B cell (primary cell): ENCODE measurements at regions of chr2 and their contacts with region 1.

Region 1: DNA sequence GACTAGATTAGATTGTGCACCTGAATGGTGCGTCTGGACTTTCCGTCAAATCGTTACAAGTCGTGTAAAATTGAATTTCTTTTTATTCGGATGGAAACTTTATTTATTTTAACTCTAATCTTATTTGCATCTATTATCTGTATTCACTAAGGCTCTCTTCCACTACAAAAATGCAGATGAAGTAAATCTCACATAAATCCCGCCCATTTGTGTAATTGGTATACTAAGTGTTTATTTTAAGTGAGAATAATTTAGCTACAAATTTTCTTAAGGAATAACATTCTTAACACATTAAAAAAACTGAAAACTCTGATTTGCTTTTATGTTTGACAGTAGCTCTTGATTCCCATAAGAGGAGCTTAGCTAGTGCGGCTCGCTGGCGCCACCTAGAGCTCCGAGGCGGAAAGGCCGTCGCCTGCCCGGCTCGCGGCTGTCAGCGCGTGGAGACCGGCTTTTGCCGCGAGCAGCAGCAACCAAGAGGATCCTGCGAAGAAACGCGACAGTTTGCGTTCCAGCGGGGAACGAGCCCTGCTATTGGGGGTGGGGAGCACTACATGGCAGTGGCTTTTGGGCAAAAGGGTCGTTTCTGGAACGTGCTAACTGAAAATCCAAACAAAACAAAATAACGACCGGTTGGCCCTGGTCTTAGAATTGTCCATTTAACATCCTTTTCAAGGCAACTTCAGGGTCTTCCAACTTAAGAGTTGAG is 6.7 kb downstream of the SP9 start:
- DNase-seq: peak; percentile 91
- ATAC-seq: peak; percentile 74
- H3K4me3 ChIP-seq: peak overlapping the region in 1 of 5 experiments; percentile 31
- H3K4me3 Mint-ChIP-seq: peak overlapping the region; percentile 82
- H3K27ac ChIP-seq: no peak overlapping the region
- H3K27ac Mint-ChIP-seq: peak overlapping the region; percentile 88
- H3K4me1 ChIP-seq: peaks cover 54 to 71% of the 10 kb centered on the region in 2 donors
- H3K4me1 Mint-ChIP-seq: peaks cover 37% of the 10 kb centered on the region
- H3K27me3 ChIP-seq: peaks cover 1 to 81% (median 71%) of the 10 kb centered on the region in 4 experiments
- H3K27me3 Mint-ChIP-seq: peaks cover 56% of the 10 kb centered on the region
- CTCF ChIP-seq: peak; percentile 99

Region 2: DNA sequence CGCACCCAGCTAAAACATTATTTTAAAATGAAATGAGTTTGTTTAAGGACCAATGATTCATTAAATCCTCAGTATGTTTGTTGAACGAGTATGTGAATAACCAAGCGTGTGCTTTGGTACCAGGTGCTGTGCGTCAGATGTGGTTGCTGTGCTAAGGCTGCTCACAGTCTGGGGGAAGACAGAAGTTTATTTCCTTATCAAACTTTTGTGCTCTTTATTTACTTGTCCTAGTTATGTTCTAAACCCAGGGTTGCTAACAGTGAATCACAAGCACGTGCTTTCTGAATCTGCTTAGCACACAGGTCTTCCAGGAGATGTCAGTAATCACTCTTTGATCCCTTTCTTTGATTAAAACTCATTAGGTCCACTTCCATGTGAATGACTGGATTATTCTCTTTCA is 1568.8 kb before region 1 on chr2:
- CTCF ChIA-PET with region 1: no interaction called
- POLR2A ChIA-PET with region 1: no interaction called
- intact Hi-C with region 1: no loop called
- DNase-seq: no peak
- ATAC-seq: no peak
- H3K4me3 ChIP-seq: no peak overlapping the region
- H3K4me3 Mint-ChIP-seq: no peak overlapping the region
- H3K27ac ChIP-seq: no peak overlapping the region
- H3K27ac Mint-ChIP-seq: no peak overlapping the region
- H3K4me1 ChIP-seq: no peaks in the 10 kb centered on the region
- H3K4me1 Mint-ChIP-seq: no peaks in the 10 kb centered on the region
- H3K27me3 ChIP-seq: no peaks in the 10 kb centered on the region
- H3K27me3 Mint-ChIP-seq: peaks cover 12% of the 10 kb centered on the region
- CTCF ChIP-seq: no peak

Region 3: GRCh38 chr2:173027181-173028128 is 1314.0 kb before region 1 on chr2:
- CTCF ChIA-PET with region 1: interaction called, 59 read pairs
- POLR2A ChIA-PET with region 1: no interaction called
- intact Hi-C with region 1: loop called (anchors 1 kb)
- DNase-seq: peak; percentile 81
- ATAC-seq: peak; percentile 74
- H3K4me3 ChIP-seq: no peak overlapping the region
- H3K4me3 Mint-ChIP-seq: no peak overlapping the region
- H3K27ac ChIP-seq: no peak overlapping the region
- H3K27ac Mint-ChIP-seq: no peak overlapping the region
- H3K4me1 ChIP-seq: peaks cover 4 to 8% of the 10 kb centered on the region in 2 donors
- H3K4me1 Mint-ChIP-seq: peaks cover 1% of the 10 kb centered on the region
- H3K27me3 ChIP-seq: peaks cover 0 to 3% (median 0%) of the 10 kb centered on the region in 4 experiments
- H3K27me3 Mint-ChIP-seq: peaks cover 16% of the 10 kb centered on the region
- CTCF ChIP-seq: peak; percentile 94

Region 4: GRCh38 chr2:173354601-173355131 is 986.8 kb before region 1 on chr2 and contains the start of gene CDCA7:
- CTCF ChIA-PET with region 1: interaction called, 3 read pairs
- POLR2A ChIA-PET with region 1: no interaction called
- intact Hi-C with region 1: loop called (anchors 5 kb)
- DNase-seq: peak; percentile 69
- ATAC-seq: peak; percentile 70
- H3K4me3 ChIP-seq: peak within 1 kb of the TSS; percentile 48 to 68 (median 64)
- H3K4me3 Mint-ChIP-seq: peak within 1 kb of the TSS; percentile 88
- H3K27ac ChIP-seq: no peak within 1 kb of the TSS
- H3K27ac Mint-ChIP-seq: peak within 1 kb of the TSS; percentile 64
- H3K4me1 ChIP-seq: peaks cover 14 to 20% of the 10 kb centered on the region in 2 donors
- H3K4me1 Mint-ChIP-seq: peaks cover 26% of the 10 kb centered on the region
- H3K27me3 ChIP-seq: peaks cover 0 to 40% (median 16%) of the 10 kb centered on the region in 4 experiments
- H3K27me3 Mint-ChIP-seq: peaks cover 27% of the 10 kb centered on the region
- CTCF ChIP-seq: no peak
- total RNA-seq, gene CDCA7: 2.6 and 3.2 TPM in 2 replicates

Region 5: DNA sequence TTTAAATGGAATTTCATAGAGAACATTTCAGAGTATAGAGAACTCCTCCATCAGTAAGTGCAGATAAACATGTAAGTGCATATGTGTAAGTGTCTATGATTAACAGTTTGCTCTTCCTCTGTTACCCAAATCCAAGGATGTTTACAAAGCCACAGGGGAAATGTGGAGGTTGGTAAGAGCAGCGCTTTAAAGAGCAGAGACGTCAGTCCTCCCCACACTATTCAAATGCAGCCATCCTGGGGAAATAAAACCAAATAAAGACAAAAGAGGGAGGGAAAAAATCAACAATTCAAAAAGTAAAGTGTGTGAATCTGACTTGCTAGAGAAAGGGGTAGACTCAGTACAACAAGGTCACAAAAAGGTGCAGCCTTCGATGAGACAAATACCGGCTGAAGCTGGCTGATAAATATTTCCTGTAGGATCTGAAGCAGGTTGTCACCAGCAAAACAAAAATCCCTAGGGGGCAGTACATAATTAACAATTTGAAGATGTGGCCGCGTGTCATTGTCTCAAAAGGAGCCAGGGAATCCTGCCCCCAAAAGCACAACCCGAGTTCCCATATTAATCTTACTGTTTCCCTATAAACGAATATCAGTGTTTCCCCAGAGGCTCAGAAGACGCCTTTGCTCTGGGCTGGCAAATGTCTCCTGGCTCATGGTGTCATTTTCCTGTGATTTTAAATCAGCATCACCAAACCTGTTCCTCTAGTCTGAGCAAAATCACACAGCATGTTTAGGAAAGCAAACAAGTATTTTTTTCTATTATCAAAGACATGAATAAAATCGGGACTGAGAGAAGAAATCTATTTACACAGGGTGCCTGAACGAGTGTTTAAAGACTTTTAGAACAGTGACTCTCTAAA is 770.2 kb before region 1 on chr2:
- CTCF ChIA-PET with region 1: no interaction called
- POLR2A ChIA-PET with region 1: no interaction called
- intact Hi-C with region 1: loop called (anchors 5 kb)
- DNase-seq: peak; percentile 13
- ATAC-seq: no peak
- H3K4me3 ChIP-seq: no peak overlapping the region
- H3K4me3 Mint-ChIP-seq: no peak overlapping the region
- H3K27ac ChIP-seq: no peak overlapping the region
- H3K27ac Mint-ChIP-seq: no peak overlapping the region
- H3K4me1 ChIP-seq: peaks cover 4 to 6% of the 10 kb centered on the region in 2 donors
- H3K4me1 Mint-ChIP-seq: peaks cover 5% of the 10 kb centered on the region
- H3K27me3 ChIP-seq: peaks cover 0 to 4% (median 0%) of the 10 kb centered on the region in 4 experiments
- H3K27me3 Mint-ChIP-seq: peaks cover 3% of the 10 kb centered on the region
- CTCF ChIP-seq: no peak

Region 6: DNA sequence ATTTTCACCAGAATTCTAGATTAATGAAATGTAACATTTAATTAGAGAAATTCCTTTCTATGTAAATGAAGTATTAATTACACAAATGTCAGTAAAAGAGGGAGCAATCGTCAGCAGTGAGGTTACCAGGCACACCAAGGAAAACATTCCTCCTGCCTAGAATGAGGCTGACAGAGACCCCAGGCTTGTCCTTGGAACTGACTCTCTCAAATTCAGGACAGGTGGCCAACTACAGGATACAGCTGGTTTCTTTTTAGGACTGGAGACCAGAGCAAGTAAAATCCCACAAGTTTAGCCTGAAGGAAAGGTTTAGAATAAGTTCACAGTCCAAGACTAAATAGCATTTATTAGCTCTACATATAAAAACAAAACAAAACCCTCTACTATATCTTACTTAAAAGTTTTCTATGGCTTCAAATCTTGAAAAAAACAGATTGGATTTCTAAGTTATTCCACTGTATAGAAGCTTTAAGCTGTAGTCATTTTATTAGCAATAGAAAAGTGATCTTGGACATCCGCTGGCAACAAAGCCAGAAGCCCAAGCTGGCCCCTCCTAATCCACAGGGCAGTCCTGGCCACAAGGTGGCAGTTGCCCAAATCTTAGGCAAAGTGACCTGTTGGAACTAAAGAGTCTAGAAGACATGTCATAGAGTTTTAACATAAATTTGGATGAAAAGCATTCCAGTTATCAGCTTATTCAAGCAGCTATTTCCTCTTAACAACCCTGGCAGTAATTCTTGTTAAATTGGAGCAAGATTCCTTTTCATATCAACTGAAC is 457.2 kb before region 1 on chr2:
- CTCF ChIA-PET with region 1: interaction called, 6 read pairs
- POLR2A ChIA-PET with region 1: no interaction called
- intact Hi-C with region 1: loop called (anchors 10 kb)
- DNase-seq: peak; percentile 36
- ATAC-seq: peak; percentile 57
- H3K4me3 ChIP-seq: no peak overlapping the region
- H3K4me3 Mint-ChIP-seq: no peak overlapping the region
- H3K27ac ChIP-seq: no peak overlapping the region
- H3K27ac Mint-ChIP-seq: no peak overlapping the region
- H3K4me1 ChIP-seq: no peaks in the 10 kb centered on the region
- H3K4me1 Mint-ChIP-seq: no peaks in the 10 kb centered on the region
- H3K27me3 ChIP-seq: peaks cover 0 to 4% (median 0%) of the 10 kb centered on the region in 4 experiments
- H3K27me3 Mint-ChIP-seq: peaks cover 18% of the 10 kb centered on the region
- CTCF ChIP-seq: peak; percentile 28

Region 7: GRCh38 chr2:174158003-174158402 is 183.4 kb before region 1 on chr2:
- CTCF ChIA-PET with region 1: interaction called, 12 read pairs
- POLR2A ChIA-PET with region 1: no interaction called
- intact Hi-C with region 1: loop called (anchors 1 kb)
- DNase-seq: peak; percentile 22
- ATAC-seq: no peak
- H3K4me3 ChIP-seq: no peak overlapping the region
- H3K4me3 Mint-ChIP-seq: no peak overlapping the region
- H3K27ac ChIP-seq: no peak overlapping the region
- H3K27ac Mint-ChIP-seq: no peak overlapping the region
- H3K4me1 ChIP-seq: no peaks in the 10 kb centered on the region
- H3K4me1 Mint-ChIP-seq: no peaks in the 10 kb centered on the region
- H3K27me3 ChIP-seq: no peaks in the 10 kb centered on the region
- H3K27me3 Mint-ChIP-seq: no peaks in the 10 kb centered on the region
- CTCF ChIP-seq: peak; percentile 36

Region 8: GRCh38 chr2:176096986-176097819 is 1755.8 kb after region 1 on chr2:
- CTCF ChIA-PET with region 1: no interaction called
- POLR2A ChIA-PET with region 1: no interaction called
- intact Hi-C with region 1: loop called (anchors 10 kb)
- DNase-seq: peak; percentile 71
- ATAC-seq: peak; percentile 65
- H3K4me3 ChIP-seq: peak overlapping the region; percentile 4 to 42 (median 17)
- H3K4me3 Mint-ChIP-seq: peak overlapping the region; percentile 75
- H3K27ac ChIP-seq: no peak overlapping the region
- H3K27ac Mint-ChIP-seq: peak overlapping the region; percentile 6
- H3K4me1 ChIP-seq: peaks cover 24 to 38% of the 10 kb centered on the region in 2 donors
- H3K4me1 Mint-ChIP-seq: peaks cover 24% of the 10 kb centered on the region
- H3K27me3 ChIP-seq: peaks cover 0 to 89% (median 73%) of the 10 kb centered on the region in 4 experiments
- H3K27me3 Mint-ChIP-seq: peaks cover 74% of the 10 kb centered on the region
- CTCF ChIP-seq: peak; percentile 76